ENCODE measurements at regions of chr12 and their contacts with region 1.

Region 1: DNA sequence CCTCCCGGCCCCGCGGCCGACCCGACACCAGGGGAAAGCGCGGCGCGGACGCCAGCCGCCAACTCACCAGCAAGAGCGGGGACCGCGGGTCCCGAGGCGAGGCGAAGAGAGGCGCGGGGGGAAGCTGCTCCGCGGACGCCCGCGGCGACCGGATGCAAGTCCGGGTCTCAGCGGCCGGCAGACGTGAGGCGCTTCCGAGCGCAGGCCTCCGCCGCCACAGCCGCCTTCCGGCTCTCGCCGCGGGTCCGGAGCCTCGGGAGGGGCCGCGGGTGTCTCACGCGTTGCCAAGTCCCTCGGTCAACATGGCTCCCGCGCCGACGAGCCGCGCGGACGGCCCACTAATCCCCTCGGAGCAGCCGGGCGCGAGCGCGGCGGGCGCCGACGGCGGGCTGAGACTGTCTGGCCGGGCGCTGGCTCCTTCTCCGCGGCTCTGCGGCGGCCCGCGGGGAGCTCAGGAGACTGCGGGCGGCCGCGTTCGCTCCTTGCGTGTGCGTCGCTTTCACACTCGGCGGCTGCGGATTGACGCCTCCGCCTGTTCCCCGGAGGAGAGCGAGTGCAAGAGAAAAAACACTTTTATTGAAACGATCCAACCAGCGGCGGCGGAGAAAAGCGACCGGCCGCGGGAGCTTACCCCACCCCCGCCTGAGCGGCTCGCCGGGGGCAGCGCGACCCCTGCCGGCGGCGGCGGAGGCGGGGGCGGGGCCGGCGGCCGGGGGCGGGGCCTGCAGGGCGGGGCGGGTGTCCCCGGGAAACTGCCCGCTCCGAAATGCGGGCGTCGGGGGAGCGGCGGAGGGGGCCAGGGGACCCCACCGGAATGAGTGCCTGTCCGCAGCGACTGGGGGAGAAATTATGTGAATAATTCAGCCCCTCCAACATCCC is at the start of gene CDK17:
- DNase-seq: peak; percentile 92
- ATAC-seq: peak; percentile 91
- total RNA-seq, gene CDK17: 16.0 TPM

Region 2: DNA sequence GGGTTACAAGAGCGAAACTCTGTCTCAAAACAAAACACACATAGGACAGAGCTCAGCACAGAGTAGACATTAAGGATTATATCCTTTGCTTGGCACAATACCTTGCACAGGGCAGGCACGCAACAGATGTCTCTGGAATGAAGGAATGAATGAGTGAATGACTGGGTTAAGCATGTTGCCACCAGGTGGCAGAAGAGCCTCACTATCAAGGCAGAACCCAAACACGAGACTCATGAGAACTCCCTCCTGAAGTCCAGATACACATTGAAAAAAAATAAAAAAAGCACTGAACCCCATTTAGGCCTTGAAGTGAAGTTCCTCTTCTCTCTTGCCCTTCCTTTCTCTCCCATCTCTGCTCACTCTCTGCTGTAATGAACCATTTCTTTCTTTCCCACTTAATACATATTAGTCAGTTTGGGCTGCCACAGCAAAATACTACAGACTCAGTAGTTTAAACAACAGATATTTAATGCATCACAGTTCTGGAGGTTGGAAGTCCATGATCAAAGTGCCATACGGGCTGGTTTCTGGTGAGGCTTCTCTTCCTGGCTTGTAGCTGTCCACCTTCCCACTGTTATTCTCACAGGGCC is 338.2 kb before region 1 on chr12:
- intact Hi-C with region 1: loop called (anchors 5 kb)
- DNase-seq: no peak
- ATAC-seq: peak; percentile 82

Region 3: DNA sequence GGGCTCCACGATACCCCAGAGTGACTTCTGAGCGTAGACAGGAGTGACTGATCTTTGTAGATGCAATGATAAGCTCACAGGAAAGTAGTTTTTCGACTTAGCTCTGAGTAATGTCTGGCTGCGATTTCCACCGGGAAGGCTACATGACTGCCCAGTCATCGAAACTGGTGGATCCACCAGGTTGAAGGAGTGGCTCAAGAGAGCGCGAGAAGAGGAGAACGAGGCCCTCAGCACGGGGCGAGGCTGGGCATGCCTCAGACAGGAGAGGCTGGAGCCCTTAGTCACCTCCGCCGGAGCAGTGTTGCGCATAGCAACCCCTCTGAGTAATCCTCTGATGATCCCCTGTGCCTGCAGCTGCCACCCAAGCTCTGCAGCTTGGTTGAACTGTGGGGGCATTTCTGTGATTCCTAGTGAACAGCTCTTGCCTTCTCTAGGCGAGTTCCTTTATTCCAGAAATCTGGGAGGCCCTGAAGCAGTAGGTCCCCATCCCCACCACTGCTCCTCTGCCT is 180.4 kb before region 1 on chr12:
- intact Hi-C with region 1: loop called (anchors 5 kb)
- DNase-seq: no peak
- ATAC-seq: no peak

Region 4: DNA sequence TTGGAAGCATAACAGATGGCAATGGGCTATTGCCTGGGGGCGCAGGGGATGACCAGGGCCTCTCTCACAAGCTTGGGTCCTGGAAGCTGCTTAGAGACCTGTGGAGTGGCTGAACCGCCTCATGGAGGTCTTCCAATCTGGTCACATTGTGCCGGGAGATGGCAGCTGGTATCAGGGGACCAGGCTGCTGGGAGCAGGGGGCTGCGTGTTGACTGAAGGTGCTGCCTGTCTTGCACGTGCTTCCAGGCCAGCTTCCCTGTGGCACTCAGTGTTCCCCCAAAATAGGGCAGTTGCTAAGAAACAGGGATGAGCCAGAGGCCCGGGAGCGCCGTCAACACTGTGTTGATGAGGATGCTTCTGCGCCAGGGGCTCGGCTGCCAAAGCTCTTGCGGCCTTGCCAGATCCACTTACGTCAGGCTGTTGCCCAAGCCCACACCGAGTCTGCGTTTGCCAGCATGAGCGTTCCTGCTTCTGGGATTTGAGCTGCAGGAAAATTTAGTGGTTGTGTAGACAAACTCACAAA is 166.2 kb before region 1 on chr12:
- intact Hi-C with region 1: loop called (anchors 2 kb)
- DNase-seq: peak; percentile 95
- ATAC-seq: peak; percentile 88

Region 5: GRCh38 chr12:96303653-96304052 is 96.5 kb before region 1 on chr12:
- intact Hi-C with region 1: loop called (anchors 5 kb)
- DNase-seq: no peak
- ATAC-seq: no peak

Region 6: DNA sequence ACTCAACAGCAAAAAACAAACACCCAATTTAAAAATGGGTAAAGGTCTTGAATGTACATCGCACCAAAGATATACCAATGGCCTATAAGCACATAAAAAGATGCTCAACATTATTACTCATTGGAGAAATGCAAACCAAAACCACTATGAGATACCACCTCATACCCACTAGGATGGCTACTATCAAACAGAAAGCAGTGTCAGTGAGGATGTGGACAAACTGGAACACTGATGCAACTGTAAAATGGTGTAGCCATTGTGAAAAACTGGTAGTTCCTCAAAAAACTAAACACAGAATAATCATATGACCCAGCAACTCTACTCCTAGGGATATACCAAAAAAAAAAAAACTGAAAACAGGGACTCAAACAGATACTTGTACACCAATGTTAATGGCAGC is 49.2 kb before region 1 on chr12:
- intact Hi-C with region 1: loop called (anchors 5 kb)
- DNase-seq: no peak
- ATAC-seq: peak; percentile 35

Region 7: GRCh38 chr12:96489103-96490056 is 89.2 kb after region 1 on chr12 and contains the start of gene CFAP54:
- intact Hi-C with region 1: loop called (anchors 5 kb)
- DNase-seq: peak; percentile 98
- ATAC-seq: peak; percentile 99
- total RNA-seq, gene CFAP54: 0.22 TPM

Measured in Right ventricle myocardium inferior (tissue), 1 donor.